Activated CD4-positive, alpha-beta memory T cell treated with anti-CD3 and anti-CD28 coated beads for 36 hours (primary cell): ENCODE measurements at regions of chr5 and their contacts with region 1.

Region 1: GRCh38 chr5:148482691-148483462 is 99.1 kb downstream of the FBXO38 start:
- DNase-seq: peak; percentile 74
- H3K4me3 Mint-ChIP-seq: no peak overlapping the region
- H3K27ac Mint-ChIP-seq: no peak overlapping the region
- H3K4me1 Mint-ChIP-seq: peaks cover 3% of the 10 kb centered on the region
- H3K27me3 Mint-ChIP-seq: peaks cover 30% of the 10 kb centered on the region

Region 2: DNA sequence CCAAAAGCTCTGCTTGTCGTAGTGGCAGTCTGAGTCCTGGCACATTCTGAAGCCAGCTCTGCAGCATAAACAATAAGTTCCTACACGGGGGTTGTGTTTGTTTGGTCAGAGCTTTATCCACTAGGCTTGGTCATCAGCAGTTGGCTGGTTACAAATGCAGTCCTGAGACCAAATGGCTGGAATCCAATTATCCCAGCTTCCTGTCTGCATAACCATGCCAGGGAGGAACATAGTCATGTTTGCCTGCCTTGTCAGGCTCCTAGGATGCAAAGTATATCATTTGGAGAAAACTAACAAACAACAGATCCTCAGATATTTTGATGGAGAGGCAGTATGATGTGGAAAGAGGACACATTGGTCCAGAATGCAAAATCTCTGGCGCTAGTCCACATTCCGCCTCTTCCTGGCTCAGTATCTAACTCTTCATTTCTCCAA is 13.4 kb before region 1 on chr5:
- CTCF ChIA-PET with region 1: interaction called, 11 read pairs
- POLR2A ChIA-PET with region 1: no interaction called
- intact Hi-C with region 1: no loop called
- DNase-seq: no peak
- H3K4me3 Mint-ChIP-seq: no peak overlapping the region
- H3K27ac Mint-ChIP-seq: no peak overlapping the region
- H3K4me1 Mint-ChIP-seq: no peaks in the 10 kb centered on the region
- H3K27me3 Mint-ChIP-seq: peaks cover 3% of the 10 kb centered on the region